B cell (primary cell): ENCODE measurements at regions of chr2 and their contacts with region 1.

Region 1: DNA sequence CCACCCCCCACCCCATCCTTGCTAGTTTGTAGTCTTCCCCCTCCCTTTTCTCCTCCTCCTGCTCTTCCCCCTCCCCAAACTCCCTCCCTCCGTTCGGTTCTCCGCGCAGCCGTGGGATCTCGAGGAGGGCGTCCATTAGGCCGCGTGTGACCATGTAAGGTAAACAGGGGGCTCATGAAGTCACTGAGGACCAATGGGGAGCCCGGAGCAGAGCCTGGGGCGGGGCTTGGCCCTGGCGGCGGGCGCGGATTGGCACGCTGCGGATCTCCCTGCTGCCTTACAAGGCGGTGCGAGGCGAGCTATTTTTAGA is 246 bp upstream of the KLF7 start:
- DNase-seq: peak; percentile 98
- ATAC-seq: peak; percentile 87
- H3K4me3 ChIP-seq: peak overlapping the region in 4 of 5 experiments; percentile 81 to 97 (median 85)
- H3K4me3 Mint-ChIP-seq: peak overlapping the region; percentile 98
- H3K27ac ChIP-seq: peak overlapping the region; percentile 95 to 99
- H3K27ac Mint-ChIP-seq: peak overlapping the region; percentile 99
- H3K4me1 ChIP-seq: peaks cover 42 to 45% of the 10 kb centered on the region in 2 donors
- H3K4me1 Mint-ChIP-seq: peaks cover 54% of the 10 kb centered on the region
- H3K27me3 ChIP-seq: no peaks in the 10 kb centered on the region
- H3K27me3 Mint-ChIP-seq: no peaks in the 10 kb centered on the region
- CTCF ChIP-seq: no peak

Region 2: DNA sequence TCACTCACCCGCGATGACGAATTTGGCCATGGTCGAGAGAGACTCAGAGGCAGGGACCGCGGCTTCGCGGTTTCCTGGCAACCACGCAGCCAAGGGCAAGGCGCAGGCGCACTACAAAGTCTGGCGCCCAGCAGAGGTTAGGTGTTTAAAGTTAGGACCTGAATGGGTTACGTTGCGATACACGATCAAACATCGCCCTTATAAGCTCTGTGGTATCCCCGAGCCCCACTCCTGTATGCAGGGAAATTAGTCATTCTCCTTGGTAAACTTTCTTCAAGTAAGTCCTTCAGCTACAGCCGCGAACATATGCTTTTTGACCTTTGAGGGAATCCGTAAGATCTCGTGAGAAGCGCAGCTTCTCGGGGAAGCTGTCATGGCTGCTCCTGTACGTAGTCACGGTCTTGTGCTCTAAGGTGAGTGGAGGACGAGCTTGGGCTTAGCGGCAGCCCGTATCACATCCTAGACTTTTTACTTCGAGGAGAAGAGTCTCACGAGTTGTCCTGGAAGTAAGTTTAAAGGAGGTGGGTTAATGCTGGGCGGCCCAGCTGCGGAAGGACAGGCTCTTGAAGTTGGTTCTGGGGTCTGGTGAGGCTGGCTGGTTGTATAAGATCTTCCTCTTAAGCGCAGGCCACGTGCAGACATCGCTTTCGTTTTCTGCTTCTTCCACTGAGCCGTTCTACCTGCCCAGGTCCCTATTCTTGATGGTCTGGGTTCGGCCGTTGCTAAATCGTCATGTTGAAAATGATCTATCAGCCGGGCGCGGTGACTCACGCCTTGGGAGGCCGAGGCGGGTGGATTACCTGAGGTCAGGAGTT is 400.5 kb before region 1 on chr2 and contains the starts of genes FASTKD2 and MDH1B:
- CTCF ChIA-PET with region 1: no interaction called
- POLR2A ChIA-PET with region 1: interaction called, 4 read pairs
- intact Hi-C with region 1: loop called (anchors 1 kb)
- DNase-seq: peak; percentile 96
- ATAC-seq: peak; percentile 85
- H3K4me3 ChIP-seq: peak within 1 kb of the TSS; percentile 63 to 96 (median 87)
- H3K4me3 Mint-ChIP-seq: peak within 1 kb of the TSS; percentile 99
- H3K27ac ChIP-seq: peak within 1 kb of the TSS; percentile 77 to 92
- H3K27ac Mint-ChIP-seq: peak within 1 kb of the TSS; percentile 97
- H3K4me1 ChIP-seq: peaks cover 14% of the 10 kb centered on the region in 2 donors
- H3K4me1 Mint-ChIP-seq: peaks cover 32% of the 10 kb centered on the region
- H3K27me3 ChIP-seq: peaks cover 0 to 17% (median 6%) of the 10 kb centered on the region in 4 experiments
- H3K27me3 Mint-ChIP-seq: no peaks in the 10 kb centered on the region
- CTCF ChIP-seq: no peak
- total RNA-seq, gene FASTKD2: 20.6 and 24.5 TPM in 2 replicates
- total RNA-seq, gene MDH1B: 0.34 TPM in 1 of 2 replicates, not detected in the other

Region 3: DNA sequence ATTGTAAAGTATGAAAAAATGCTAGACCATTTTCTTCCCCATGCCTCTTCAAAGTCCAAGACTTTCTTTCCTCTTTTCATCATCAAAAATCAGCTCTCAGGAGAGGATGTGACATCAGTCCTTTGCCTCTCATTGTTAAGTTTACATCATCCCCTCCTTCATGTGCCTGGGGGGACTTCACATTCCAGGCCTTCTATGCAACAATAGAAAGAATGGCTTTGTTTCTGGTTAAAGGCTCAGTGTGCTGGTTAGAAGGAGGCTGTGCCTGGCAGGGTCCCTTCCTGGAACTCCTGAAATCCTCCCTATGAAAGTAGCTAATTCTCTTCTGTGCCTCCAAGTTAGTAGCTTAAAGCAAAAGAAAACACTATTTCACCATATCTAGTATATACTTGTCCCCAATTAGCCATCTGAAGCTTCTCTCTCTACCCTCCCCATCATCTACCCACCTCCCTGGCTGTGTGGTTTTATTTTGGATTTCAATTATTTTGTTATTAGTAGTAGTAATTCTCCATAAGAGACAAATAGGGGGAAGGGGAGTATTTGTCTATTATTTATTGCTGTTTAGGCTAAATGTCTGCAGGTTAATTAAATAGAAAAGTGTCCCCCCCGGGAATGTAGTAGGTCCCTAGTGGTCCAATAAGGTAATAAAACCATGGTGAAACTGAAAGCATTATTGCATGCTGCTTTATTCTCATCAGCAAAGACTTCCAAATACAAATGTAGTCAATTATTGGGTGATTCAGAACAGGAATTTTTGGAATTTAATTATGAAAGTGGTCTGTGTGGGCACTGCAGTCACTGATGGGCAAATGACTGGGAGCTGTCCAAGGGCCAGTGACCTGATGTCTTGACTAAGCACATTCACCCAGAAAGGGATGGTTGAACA is 157.6 kb before region 1 on chr2:
- CTCF ChIA-PET with region 1: no interaction called
- POLR2A ChIA-PET with region 1: no interaction called
- intact Hi-C with region 1: no loop called
- DNase-seq: peak; percentile 10
- ATAC-seq: no peak
- H3K4me3 ChIP-seq: no peak overlapping the region
- H3K4me3 Mint-ChIP-seq: no peak overlapping the region
- H3K27ac ChIP-seq: no peak overlapping the region
- H3K27ac Mint-ChIP-seq: no peak overlapping the region
- H3K4me1 ChIP-seq: no peaks in the 10 kb centered on the region
- H3K4me1 Mint-ChIP-seq: no peaks in the 10 kb centered on the region
- H3K27me3 ChIP-seq: no peaks in the 10 kb centered on the region
- H3K27me3 Mint-ChIP-seq: peaks cover 9% of the 10 kb centered on the region
- CTCF ChIP-seq: peak; percentile 50

Region 4: DNA sequence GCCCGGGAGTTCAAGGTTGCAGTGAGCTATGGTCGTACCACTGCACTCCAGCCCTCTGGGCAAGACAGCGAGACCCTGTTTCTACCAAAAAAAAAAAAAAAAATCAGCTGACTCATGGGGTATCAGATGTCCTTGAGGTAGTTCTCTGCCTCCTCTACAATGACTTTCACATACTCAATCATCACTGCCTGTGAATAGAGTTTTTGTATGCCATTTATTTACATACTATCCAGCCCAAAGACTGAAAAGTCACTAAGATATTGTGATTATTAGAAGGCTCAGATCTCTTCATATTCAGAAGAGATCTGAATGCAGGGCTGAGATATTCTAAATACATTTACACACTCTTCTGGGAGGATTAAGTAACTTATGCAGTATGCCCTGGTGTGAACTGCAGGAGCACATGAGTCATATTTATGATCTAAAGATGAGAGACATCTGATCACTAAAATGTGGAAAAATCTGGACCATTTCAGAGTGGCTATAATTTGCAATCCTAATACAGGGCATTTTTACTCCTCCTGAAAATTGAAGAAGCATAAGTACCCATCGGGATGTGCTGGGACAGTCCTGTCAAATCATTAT is 39.2 kb before region 1 on chr2:
- CTCF ChIA-PET with region 1: no interaction called
- POLR2A ChIA-PET with region 1: no interaction called
- intact Hi-C with region 1: loop called (anchors 5 kb)
- DNase-seq: no peak
- ATAC-seq: no peak
- H3K4me3 ChIP-seq: no peak overlapping the region
- H3K4me3 Mint-ChIP-seq: no peak overlapping the region
- H3K27ac ChIP-seq: no peak overlapping the region
- H3K27ac Mint-ChIP-seq: no peak overlapping the region
- H3K4me1 ChIP-seq: peaks cover 19 to 23% of the 10 kb centered on the region in 2 donors
- H3K4me1 Mint-ChIP-seq: peaks cover 49% of the 10 kb centered on the region
- H3K27me3 ChIP-seq: no peaks in the 10 kb centered on the region
- H3K27me3 Mint-ChIP-seq: no peaks in the 10 kb centered on the region
- CTCF ChIP-seq: no peak

Region 5: DNA sequence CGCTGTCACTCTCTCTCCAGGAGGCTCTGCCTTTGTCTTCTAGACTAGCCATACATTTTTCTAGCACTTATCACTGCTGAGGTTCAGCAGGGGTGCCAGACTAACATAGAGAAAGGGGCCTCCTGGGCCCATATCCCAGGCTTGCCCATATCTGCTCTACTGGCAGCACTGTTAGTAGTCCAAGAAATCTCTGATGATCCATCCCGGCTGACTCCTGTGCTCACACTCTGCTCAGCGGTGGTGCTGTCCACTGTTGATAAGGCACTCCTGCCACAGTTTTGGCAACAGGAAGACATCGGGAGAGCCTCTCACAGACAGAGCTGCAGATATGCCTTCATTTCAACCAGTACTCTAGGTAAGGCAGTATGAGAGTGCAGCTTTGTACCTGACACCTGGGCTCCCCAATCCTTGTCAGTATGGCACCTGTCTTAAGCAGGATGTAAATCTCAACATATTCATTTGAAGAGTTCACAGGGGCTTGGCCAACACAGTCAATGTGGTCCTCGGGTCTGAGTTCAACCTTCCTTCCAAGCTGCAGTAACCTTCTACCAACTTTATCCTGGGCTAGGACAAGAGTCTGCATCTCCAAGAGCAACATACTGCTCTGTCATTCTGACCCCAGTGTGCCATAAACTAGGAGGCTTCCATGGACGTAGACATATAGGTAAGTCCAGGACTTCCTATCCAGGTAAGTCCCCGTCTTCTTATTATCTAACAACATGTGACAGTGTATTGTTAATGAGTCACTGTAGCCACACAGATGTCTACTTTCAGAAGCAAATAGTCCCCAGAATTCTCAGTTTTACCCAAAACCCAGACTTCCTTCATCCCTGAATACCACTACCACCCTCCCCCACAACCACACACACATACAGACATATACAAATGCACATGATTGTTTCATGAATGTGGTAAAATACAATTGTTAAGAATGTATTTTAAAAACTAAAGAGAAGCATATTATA is 16.5 kb before region 1 on chr2:
- CTCF ChIA-PET with region 1: interaction called, 92 read pairs
- POLR2A ChIA-PET with region 1: interaction called, 122 read pairs
- intact Hi-C with region 1: loop called (anchors 1 kb)
- DNase-seq: no peak
- ATAC-seq: no peak
- H3K4me3 ChIP-seq: no peak overlapping the region
- H3K4me3 Mint-ChIP-seq: peak overlapping the region; percentile 59
- H3K27ac ChIP-seq: no peak overlapping the region
- H3K27ac Mint-ChIP-seq: peak overlapping the region; percentile 51
- H3K4me1 ChIP-seq: peaks cover 59 to 70% of the 10 kb centered on the region in 2 donors
- H3K4me1 Mint-ChIP-seq: peaks cover 74% of the 10 kb centered on the region
- H3K27me3 ChIP-seq: no peaks in the 10 kb centered on the region
- H3K27me3 Mint-ChIP-seq: no peaks in the 10 kb centered on the region
- CTCF ChIP-seq: no peak

Region 6: DNA sequence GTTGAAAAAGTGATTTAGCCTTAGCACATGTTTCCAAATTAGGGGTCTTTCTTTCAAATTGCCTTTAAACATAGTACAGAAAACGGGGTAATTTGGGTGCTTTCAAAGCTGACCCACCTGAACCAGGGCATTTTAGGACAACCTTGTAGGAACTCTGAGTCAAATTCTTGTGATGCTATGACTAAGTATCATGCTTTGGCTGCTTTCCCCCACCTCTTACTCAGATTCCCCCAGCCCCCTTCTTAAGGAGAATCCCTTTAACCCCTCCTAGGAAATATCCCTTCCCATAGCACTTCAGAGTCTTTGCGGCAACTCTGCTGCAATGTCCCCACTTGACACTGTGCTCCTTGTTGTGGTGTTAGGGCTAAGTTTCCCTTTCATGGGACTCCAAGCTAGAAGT is 18.4 kb after region 1 on chr2:
- CTCF ChIA-PET with region 1: no interaction called
- POLR2A ChIA-PET with region 1: no interaction called
- intact Hi-C with region 1: no loop called
- DNase-seq: no peak
- ATAC-seq: no peak
- H3K4me3 ChIP-seq: no peak overlapping the region
- H3K4me3 Mint-ChIP-seq: no peak overlapping the region
- H3K27ac ChIP-seq: no peak overlapping the region
- H3K27ac Mint-ChIP-seq: no peak overlapping the region
- H3K4me1 ChIP-seq: no peaks in the 10 kb centered on the region
- H3K4me1 Mint-ChIP-seq: no peaks in the 10 kb centered on the region
- H3K27me3 ChIP-seq: no peaks in the 10 kb centered on the region
- H3K27me3 Mint-ChIP-seq: peaks cover 7% of the 10 kb centered on the region
- CTCF ChIP-seq: no peak

Region 7: GRCh38 chr2:207202645-207203044 is 36.7 kb after region 1 on chr2:
- CTCF ChIA-PET with region 1: no interaction called
- POLR2A ChIA-PET with region 1: no interaction called
- intact Hi-C with region 1: no loop called
- DNase-seq: no peak
- ATAC-seq: no peak
- H3K4me3 ChIP-seq: no peak overlapping the region
- H3K4me3 Mint-ChIP-seq: no peak overlapping the region
- H3K27ac ChIP-seq: no peak overlapping the region
- H3K27ac Mint-ChIP-seq: no peak overlapping the region
- H3K4me1 ChIP-seq: no peaks in the 10 kb centered on the region
- H3K4me1 Mint-ChIP-seq: no peaks in the 10 kb centered on the region
- H3K27me3 ChIP-seq: peaks cover 0 to 2% (median under 1%) of the 10 kb centered on the region in 4 experiments
- H3K27me3 Mint-ChIP-seq: peaks cover 14% of the 10 kb centered on the region
- CTCF ChIP-seq: no peak

Region 8: DNA sequence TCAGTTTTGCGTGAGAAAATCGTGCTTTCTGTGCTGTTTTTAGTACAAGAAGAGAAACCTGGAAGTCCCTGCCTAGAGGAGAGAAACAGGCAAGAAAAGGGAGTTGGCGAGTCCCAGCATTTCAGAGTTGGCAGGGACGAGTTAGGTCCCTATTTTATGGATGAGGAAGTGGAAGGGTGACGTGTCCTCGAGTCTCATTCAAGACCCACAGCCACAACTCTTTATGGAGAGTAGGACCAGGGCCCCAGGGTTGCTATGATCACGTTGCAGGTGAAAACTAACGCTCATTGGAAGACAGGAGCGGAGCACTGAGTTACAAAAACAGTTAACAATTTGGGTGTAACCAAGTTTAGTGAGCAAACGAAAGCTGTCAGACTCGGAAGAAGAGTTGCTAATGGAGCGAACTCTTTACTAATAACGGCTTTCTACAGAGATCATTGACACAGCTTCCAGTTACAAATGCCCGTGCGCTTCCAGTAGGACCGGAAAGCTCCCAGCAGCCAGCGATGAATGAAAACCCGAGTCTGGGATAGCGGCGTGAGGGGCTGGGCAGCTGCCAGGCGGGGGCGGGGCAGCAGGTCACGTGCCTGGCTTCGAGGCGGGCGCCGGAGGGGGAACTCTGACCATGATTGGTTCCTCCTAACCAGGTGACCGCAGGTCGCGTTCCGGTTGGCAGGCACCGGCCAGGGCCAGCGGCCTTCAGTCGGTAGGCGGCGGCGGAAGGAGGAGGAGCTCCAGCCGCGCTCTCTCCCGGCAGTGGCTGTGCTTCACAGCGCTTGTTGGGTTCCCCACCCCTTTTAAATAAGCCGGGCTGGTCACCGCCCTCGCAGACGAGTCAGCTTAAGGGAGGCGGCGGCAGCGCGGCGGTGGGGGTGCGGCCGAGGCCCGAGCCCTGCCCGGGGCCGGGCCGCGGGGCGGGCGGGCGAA is 545.1 kb after region 1 on chr2 and contains the start of gene CCNYL1:
- CTCF ChIA-PET with region 1: no interaction called
- POLR2A ChIA-PET with region 1: interaction called, 3 read pairs
- intact Hi-C with region 1: loop called (anchors 2 kb)
- DNase-seq: peak; percentile 99
- ATAC-seq: peak; percentile 94
- H3K4me3 ChIP-seq: peak within 1 kb of the TSS; percentile 81 to 98 (median 93)
- H3K4me3 Mint-ChIP-seq: peak within 1 kb of the TSS; percentile 91
- H3K27ac ChIP-seq: peak within 1 kb of the TSS; percentile 78 to 83
- H3K27ac Mint-ChIP-seq: peak within 1 kb of the TSS; percentile 88
- H3K4me1 ChIP-seq: peaks cover 17 to 19% of the 10 kb centered on the region in 2 donors
- H3K4me1 Mint-ChIP-seq: peaks cover 23% of the 10 kb centered on the region
- H3K27me3 ChIP-seq: no peaks in the 10 kb centered on the region
- H3K27me3 Mint-ChIP-seq: no peaks in the 10 kb centered on the region
- CTCF ChIP-seq: no peak
- total RNA-seq, gene CCNYL1: 14.2 and 15.1 TPM in 2 replicates

Region 9: DNA sequence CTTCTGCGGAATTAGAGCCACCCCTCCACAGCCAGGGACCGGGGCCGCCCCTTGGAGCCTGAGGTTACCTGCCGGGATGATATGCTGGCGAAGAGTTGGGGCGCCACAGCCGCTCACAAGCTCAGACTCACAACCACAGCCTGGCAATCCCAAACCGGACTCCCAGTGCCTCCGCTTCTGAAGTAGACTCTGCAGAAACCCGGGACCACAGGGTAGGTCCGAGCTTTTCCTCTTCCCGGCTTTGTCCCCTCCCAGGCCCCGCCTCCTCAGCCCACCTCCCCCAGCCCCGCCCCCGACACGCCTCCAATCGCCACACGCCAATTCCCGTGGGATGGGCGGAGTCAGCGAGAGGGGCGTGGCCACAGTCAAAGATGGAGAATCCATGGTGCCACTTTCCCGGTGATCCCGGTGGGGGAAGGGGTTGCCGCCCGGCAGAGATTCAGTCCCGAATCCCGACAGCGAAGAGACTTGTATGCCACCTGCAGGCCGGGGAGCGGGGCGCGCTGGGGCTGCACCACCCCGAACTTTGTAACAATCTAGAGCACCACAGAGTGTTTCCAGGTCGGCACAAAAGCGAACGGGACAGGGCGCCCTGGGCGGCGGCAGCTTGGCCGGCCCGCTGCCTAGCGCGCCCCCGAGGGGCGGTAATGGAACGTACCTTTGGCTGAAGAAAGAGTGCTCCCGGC is 1089.0 kb after region 1 on chr2 and contains the start of gene IDH1:
- CTCF ChIA-PET with region 1: no interaction called
- POLR2A ChIA-PET with region 1: no interaction called
- intact Hi-C with region 1: loop called (anchors 10 kb)
- DNase-seq: peak; percentile 94
- ATAC-seq: peak; percentile 80
- H3K4me3 ChIP-seq: peak within 1 kb of the TSS; percentile 83 to 99 (median 93)
- H3K4me3 Mint-ChIP-seq: peak within 1 kb of the TSS; percentile 99
- H3K27ac ChIP-seq: peak within 1 kb of the TSS; percentile 47 to 65
- H3K27ac Mint-ChIP-seq: peak within 1 kb of the TSS; percentile 86
- H3K4me1 ChIP-seq: peaks cover 30 to 41% of the 10 kb centered on the region in 2 donors
- H3K4me1 Mint-ChIP-seq: peaks cover 52% of the 10 kb centered on the region
- H3K27me3 ChIP-seq: no peaks in the 10 kb centered on the region
- H3K27me3 Mint-ChIP-seq: no peaks in the 10 kb centered on the region
- CTCF ChIP-seq: peak; percentile 33
- total RNA-seq, gene IDH1: 41.4 TPM in 2 replicates